Vagina (tissue), 2 donors: ENCODE measurements at regions of chr2 and their contacts with region 1.

Region 1: GRCh38 chr2:46296840-46297545 is at the start of gene EPAS1:
- DNase-seq: peak in 1 of 2 donors; percentile 96
- H3K4me3 ChIP-seq: peak within 1 kb of the TSS; percentile 73 to 94
- H3K27ac ChIP-seq: peak within 1 kb of the TSS; percentile 97
- H3K4me1 ChIP-seq: peaks cover 23% of the 10 kb centered on the region
- H3K27me3 ChIP-seq: no peaks in the 10 kb centered on the region
- CTCF ChIP-seq: no peak
- POLR2A ChIP-seq: peak; percentile 16 to 73
- total RNA-seq, gene EPAS1: 222 TPM

Region 2: DNA sequence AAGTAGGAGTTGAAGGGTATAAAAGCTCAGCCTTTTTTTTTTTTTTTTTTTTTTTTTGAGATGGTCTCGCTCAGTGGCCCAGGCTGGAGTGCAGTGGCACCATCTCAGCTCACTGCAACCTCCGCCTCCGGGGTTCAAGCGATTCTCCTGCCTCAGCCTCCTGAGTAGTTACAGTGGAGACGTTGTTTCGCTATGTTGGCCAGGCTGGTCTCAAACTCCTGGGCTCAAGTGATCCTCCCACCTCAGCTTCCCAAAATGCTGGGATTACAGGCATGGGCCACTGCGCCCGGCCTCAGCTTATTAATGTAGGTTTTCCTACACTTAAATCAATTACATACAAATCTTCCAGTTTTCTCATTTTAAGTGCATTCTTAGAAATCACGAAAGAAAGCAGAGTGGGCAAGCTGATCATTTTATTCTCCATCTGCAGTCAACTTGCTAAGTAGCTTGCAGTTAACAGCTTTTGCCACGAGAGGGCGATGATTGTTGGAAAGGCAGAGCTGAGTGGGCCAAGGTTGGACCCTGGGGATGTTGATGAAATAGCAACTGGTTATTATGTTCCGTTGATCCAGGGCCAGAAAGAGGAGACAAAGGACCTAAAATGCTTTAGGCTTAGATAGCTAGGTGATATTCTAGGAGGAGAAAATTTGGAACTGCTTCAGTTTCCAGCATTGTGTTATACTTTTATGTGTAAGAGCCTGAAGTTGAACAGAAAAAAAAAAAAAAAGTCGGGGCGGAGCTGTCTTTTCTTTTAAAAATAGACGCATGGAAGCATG is 234.2 kb before region 1 on chr2:
- intact Hi-C with region 1: loop called (anchors 10 kb)
- DNase-seq: no peak
- H3K4me3 ChIP-seq: no peak overlapping the region
- H3K27ac ChIP-seq: peak overlapping the region; percentile 9
- H3K4me1 ChIP-seq: peaks cover 20% of the 10 kb centered on the region
- H3K27me3 ChIP-seq: no peaks in the 10 kb centered on the region
- CTCF ChIP-seq: peak; percentile 58 to 93 (median 85)
- POLR2A ChIP-seq: no peak

Region 3: GRCh38 chr2:46364797-46365457 is 67.9 kb after region 1 on chr2:
- intact Hi-C with region 1: loop called (anchors 10 kb)
- DNase-seq: no peak
- H3K4me3 ChIP-seq: no peak overlapping the region
- H3K27ac ChIP-seq: no peak overlapping the region
- H3K4me1 ChIP-seq: peaks cover 13% of the 10 kb centered on the region
- H3K27me3 ChIP-seq: no peaks in the 10 kb centered on the region
- CTCF ChIP-seq: peak; percentile 50 to 79 (median 55)
- POLR2A ChIP-seq: no peak